ENCODE measurements at regions of chr2 and their contacts with region 1.

Region 1: DNA sequence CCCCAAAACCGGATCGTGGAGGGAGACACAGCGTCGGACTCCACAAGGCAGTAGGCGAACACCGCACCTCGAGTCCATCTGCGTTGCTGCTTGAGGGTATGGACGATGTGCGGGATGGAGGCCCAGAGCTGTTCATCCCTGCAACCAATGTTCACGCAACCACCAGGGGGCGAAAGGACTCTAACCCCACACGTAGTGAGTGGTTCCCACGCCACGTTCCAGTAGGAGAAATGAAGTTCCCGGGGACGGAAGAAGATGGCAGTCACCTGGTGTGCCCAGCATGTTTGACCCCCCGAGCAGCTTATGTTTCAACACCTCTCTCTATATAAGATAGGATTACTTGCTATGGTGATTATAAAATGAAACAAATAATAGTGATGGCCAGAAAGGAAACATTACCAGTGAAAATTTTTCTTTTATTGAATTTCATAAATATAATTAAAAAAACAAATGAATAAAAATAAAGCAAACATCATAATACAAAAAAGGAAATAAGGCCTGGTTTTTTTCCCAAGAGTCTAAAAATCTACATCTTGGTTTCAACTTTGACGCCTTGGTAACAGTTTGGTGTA is 184.3 kb downstream of the SH3BP4 start:
- ATAC-seq: peak; percentile 56 to 100 (median 75)
- H3K4me3 ChIP-seq: no peak overlapping the region
- H3K27ac ChIP-seq: no peak overlapping the region
- H3K4me1 ChIP-seq: peaks cover 0 to 3% of the 10 kb centered on the region in 2 donors

Region 2: GRCh38 chr2:234620018-234620417 is 516.1 kb before region 1 on chr2:
- in situ Hi-C with region 1: no loop called
- ATAC-seq: no peak
- H3K4me3 ChIP-seq: no peak overlapping the region
- H3K27ac ChIP-seq: no peak overlapping the region
- H3K4me1 ChIP-seq: peaks cover 0 to 1% of the 10 kb centered on the region in 2 donors

Region 3: DNA sequence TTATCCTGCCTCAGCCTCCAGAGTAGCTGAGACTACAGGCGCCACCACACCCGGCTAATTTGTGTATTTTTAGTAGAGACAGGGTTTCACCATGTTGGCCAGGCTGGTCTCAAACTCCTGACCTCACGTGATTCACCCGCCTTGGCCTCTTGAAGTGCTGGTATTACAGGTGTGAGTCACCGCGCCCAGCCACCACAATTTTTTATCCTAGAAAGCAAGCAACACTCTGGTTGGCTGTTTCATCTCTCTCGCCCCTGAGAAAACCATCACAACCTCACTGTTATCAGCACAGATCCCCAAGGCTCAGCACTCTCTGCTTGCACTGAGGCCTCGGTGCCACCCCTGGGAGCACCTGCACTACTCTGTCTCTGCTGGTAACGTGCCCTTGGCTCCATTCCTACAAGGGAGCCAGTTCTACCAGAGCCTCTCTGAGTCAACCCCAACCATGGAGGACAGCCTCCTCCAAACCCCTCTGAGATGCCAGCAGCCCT is 222.9 kb after region 1 on chr2:
- in situ Hi-C with region 1: no loop called
- ATAC-seq: no peak
- H3K4me3 ChIP-seq: no peak overlapping the region
- H3K27ac ChIP-seq: no peak overlapping the region
- H3K4me1 ChIP-seq: peaks cover 5 to 6% of the 10 kb centered on the region in 2 donors

Region 4: DNA sequence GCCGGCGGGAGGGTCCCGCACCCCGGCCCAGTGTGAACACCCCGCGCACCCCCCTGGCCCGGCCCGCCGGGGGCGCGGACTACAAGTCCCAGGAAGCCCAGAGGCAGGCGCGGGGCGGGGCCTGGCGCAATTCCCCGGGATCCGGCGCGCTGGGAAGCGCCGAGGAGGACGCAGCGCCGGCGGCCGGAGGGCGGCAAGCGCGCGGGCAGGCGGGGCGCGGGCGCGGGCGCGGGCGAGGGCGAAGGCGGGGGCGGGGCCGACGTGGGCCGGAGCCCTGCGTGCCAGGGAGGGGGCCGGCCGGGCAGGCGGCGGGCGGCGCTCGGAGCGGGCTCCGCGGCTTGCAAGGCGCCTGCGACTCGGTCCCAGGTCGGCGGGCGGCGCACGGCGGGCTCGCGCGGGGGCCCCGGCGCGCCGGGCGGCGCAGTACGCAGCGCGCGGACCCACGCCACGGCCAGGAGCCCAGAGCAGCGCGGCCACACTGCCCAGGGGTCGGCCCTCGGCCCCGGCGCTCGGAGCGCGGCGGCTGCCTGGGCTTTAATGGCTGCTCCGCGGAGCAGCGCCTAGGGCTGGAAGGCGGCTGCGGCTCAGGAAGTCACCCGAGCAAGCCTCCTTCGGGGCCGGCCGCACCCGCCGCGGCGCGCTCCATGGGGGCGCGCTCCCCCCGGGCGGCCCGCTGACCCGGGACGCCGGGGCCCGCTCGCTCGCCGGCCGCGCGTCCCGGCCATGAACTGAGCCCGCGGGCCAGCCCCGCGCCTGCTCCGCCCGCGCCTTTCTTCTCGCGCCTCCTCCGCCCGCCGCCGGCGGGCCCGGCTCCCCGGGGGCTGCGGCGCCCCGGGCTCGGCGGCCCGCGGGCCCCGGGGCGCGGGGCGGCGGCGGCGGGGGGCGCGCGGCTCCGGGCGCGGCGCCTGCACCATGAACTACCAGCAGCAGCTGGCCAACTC is 358.0 kb after region 1 on chr2 and contains the start of gene AGAP1:
- in situ Hi-C with region 1: loop called in 1 of 9 experiments (anchors 25 kb)
- ATAC-seq: peak; percentile 78 to 90 (median 86)
- H3K4me3 ChIP-seq: peak within 1 kb of the TSS; percentile 52 to 72 (median 70)
- H3K27ac ChIP-seq: peak within 1 kb of the TSS; percentile 64 to 72
- H3K4me1 ChIP-seq: peaks cover 31 to 33% of the 10 kb centered on the region in 2 donors
- total RNA-seq, gene AGAP1: 5.9 to 51.1 (median 34.3) TPM

Region 5: DNA sequence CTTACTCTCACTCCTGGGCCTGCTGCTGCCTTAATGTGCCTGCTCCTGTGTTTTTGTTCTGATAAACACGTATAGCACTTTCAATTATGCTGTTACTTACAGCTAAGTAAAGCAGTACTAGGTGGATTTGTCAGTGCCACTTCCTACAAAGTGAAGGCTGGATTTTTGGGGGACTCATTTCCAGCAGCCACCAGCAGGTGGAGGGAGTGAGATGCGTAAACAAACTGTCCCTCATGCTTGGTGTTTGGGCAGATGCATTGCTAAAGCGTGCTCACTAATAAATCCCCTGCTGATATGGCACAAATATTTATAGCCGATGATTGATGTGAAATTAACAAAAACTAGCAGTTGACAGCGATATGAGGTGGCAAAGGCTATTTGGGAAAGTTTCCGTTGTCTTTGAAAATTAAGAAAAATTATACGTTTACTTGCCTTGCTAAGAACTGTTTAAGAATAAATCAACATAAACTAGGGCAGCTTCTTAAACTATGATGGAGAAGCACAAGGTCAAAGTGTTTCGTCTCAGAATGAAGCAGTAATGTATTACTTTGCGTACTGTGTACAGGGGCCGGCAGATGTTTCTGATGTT is 459.4 kb after region 1 on chr2:
- in situ Hi-C with region 1: loop called in 5 of 9 experiments (anchors 25 kb)
- ATAC-seq: peak; percentile 49 to 75 (median 57)
- H3K4me3 ChIP-seq: no peak overlapping the region
- H3K27ac ChIP-seq: no peak overlapping the region
- H3K4me1 ChIP-seq: no peaks in the 10 kb centered on the region